RWPE1 (cell line): ENCODE measurements at regions of chr14 and their contacts with region 1.

Region 1: GRCh38 chr14:24241829-24242443 is 487 bp downstream of the TINF2 start:
- DNase-seq: peak; percentile 97
- H3K27ac ChIP-seq: peak overlapping the region; percentile 97
- CTCF ChIP-seq: no peak

Region 2: DNA sequence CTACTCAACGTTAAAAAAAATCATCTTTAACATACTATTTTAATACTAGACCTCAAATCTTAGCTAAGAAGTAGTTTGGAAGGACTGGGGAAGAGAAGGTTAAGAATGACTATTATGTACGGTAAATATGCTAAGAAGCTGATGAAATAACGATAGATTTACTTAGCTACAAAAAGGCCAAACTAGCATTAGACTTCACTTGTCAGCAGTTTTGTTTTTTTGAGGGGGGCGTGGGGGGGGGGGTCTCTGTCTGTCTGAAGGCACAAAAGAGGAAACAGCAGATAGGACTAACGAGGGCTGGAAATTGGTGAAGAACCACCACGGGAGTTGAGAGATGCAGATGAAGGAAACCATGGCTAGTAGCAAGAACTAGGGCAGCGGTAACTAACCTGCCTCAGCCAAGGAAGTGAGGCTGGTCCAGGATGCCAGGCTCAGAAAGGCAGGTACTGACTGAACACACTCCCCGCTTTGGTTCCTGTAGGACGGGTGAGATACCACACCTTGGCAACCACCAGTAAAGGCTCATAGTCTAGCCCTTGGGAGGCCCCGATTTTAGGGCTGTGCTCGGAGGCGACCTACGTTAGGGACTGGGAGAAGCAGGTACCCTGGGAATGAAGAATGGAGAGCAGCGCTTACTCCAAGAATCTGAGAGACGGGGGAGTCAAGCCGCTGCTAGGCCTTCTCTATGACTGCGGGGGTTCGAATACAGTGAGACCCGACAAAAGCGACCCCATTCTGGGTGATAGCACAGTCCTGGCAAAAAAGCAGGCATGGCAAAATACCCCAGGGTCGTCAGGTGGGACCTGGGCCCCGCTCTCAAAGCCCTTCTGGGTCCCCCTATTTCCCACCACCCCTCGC is 10.4 kb before region 1 on chr14:
- CTCF ChIA-PET with region 1: interaction called, 3 read pairs
- POLR2A ChIA-PET with region 1: interaction called, 11 read pairs
- DNase-seq: peak; percentile 34
- H3K27ac ChIP-seq: peak overlapping the region; percentile 96
- CTCF ChIP-seq: no peak

Region 3: GRCh38 chr14:24262821-24263761 is 21.2 kb after region 1 on chr14 and contains the start of gene TGM1:
- CTCF ChIA-PET with region 1: interaction called, 11 read pairs
- POLR2A ChIA-PET with region 1: interaction called, 7 read pairs
- DNase-seq: peak; percentile 30
- H3K27ac ChIP-seq: peak within 1 kb of the TSS; percentile 96
- CTCF ChIP-seq: no peak

Region 4: DNA sequence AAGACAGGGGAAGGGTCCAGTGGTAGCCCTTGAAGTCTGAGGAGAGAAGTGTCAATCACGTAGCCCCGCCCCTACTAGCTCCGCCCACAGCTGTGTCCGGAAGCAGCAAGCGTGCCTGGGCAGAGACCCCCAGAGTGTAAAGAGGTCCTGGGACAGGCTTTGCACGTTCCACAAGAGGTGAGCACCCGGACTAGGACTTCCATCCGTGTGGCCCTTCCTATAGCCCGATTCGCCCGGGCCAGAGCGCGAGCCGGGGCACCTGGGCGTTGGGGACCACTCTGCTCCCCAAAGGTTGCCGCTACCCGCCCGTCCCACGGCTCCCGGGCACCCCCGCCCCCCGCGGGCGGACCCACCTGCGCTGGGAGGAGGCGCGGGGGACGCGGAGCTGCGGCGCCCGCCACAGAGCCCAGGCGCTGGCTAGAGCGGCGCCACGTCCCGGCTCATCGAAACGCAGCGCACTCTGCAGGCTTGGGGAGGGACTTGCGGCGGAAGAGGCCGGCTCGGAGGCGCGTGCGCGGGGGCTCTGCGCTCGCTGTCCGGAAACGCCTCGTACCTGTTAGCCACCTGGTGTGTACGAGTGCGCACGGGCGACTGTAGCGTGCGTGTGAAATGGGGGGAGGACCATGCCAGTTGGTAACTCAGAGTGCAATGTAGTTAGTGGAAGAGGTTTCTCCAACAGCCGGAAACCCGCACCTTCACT is 29.3 kb after region 1 on chr14 and contains the start of gene RABGGTA:
- CTCF ChIA-PET with region 1: interaction called, 4 read pairs
- POLR2A ChIA-PET with region 1: interaction called, 12 read pairs
- DNase-seq: peak; percentile 91
- H3K27ac ChIP-seq: peak within 1 kb of the TSS; percentile 96
- CTCF ChIP-seq: peak; percentile 88

Region 5: GRCh38 chr14:24299255-24300195 is 57.6 kb after region 1 on chr14 and contains the starts of genes DHRS1 and NOP9:
- CTCF ChIA-PET with region 1: interaction called, 51 read pairs
- POLR2A ChIA-PET with region 1: interaction called, 17 read pairs
- DNase-seq: peak; percentile 95
- H3K27ac ChIP-seq: peak within 1 kb of the TSS; percentile 94
- CTCF ChIP-seq: no peak

Region 6: DNA sequence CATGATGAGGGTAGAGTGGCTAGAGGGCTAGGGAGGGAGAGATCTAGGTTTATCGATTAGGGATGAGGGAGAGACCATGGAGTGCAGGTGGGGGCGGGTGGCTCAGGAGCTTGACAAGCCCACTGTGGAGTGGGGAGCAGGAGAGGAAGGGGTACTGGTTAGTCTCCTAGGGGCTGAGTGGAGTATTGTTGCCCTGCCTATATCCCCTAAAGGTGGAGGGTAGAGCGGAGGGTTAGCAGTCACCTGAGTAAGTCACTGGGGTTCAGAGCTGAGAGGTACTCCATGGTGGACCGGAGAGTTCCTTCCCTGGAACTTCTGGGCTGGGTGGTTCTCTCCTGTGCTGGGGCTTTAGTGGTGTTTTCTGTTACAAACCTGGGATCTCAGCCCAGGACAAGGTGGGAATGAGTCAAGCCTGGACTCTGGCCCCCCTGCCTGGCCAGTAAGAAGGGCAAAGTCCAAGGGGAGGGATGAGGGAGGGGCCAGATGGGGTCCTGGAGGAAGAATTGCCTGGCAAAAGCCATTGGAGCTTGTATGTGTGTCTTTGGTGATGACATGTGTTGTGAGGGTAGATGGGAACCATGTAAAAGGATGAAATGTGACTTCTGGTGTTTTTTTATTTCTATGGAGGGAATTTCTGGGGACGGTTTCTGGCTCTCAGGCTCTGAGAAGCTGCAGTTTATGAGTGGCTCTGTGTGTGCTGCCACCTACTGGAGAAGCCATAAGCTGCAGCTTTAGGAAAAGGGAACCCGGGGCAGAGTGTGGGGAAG is 65.8 kb after region 1 on chr14 and contains the start of gene CIDEB:
- CTCF ChIA-PET with region 1: interaction called, 14 read pairs
- POLR2A ChIA-PET with region 1: interaction called, 3 read pairs
- DNase-seq: peak; percentile 63
- H3K27ac ChIP-seq: peak within 1 kb of the TSS; percentile 98
- CTCF ChIP-seq: peak; percentile 93